Common myeloid progenitor, CD34-positive (primary cell): ENCODE measurements at regions of chr20 and their contacts with region 1.

Region 1: DNA sequence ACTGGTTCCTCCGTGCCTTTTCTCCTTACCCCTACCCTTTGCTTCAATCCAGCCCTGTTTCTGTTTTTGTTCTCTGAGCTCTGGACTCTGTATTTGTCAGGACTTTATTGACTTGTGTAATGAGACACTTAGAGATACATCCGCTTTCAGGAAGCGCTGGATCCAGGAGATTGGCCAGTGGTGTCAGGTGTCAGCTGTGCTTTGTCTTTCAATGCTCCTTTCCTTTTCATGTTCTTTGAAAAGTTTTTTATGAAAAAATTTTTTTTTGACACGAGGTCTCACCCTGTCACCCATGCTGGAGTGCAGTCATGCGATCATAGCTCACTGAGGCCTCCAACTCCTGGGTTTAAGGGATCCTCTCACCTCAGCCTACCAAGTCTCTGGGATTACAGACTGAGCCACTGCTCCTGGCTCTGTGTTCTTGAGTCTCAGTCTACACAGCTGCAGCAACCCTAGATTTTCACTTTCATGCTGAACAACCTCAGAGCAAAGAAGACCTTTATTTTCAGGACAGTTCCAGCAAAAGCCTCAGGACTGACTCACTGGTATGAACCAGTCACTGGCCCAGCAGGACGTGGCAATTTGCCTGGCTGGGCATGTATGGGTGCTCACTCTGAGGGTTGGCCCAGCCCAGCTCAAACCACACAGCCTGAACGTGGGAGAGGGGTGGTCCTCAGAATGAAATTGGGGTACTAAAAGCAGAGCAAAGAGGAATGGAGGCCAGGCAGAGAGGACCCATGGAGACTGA is 108.5 kb downstream of the DHX35 start:
- DNase-seq: no peak
- H3K4me3 ChIP-seq: no peak overlapping the region
- H3K27ac ChIP-seq: no peak overlapping the region
- H3K4me1 ChIP-seq: no peaks in the 10 kb centered on the region
- H3K27me3 ChIP-seq: peaks cover 0 to 20% (median 6%) of the 10 kb centered on the region in 5 experiments

Region 2: DNA sequence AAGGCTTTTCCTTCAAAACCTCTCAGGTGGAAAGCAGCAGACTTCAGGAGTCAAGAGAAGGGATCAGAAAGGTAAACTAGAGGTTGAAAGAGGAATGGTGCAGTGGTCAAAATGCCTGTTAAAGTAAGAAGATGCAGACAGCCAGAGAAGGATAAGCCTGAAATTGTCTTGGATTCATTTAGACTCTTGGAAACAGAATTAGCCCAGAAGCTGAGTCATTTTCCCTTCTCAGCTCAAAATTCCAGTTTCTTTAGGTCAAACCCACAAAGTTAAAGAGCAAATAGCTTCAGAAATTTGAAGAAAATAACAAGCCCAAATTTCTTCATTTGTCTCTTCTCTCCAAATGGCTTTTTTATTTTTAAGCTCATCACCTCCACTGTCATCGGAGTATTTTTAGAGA is 34.6 kb before region 1 on chr20:
- CTCF ChIA-PET with region 1: no interaction called
- POLR2A ChIA-PET with region 1: no interaction called
- DNase-seq: no peak
- H3K4me3 ChIP-seq: no peak overlapping the region
- H3K27ac ChIP-seq: no peak overlapping the region
- H3K4me1 ChIP-seq: no peaks in the 10 kb centered on the region
- H3K27me3 ChIP-seq: no peaks in the 10 kb centered on the region

Region 3: DNA sequence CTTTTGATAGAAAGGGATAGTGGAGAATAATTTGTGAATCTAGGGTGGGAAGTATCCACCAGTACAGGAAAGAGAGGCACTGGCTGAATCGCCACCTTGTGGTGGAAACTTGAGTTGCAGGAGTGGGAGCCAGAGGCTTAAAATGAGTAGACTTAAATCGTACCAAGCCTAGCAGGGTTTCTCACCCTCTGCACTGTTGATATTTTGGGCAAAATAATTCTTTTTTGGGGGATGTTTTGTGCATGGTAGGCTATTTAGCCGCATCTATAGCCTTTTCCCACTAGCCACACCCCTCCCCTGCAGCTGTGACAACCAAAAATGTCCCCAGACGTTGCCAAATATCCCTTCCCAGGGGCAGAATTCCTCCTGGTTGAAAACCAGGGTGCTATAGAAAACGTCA is 10.6 kb after region 1 on chr20:
- CTCF ChIA-PET with region 1: interaction called, 10 read pairs
- POLR2A ChIA-PET with region 1: no interaction called
- DNase-seq: peak; percentile 66 to 85 (median 76)
- H3K4me3 ChIP-seq: no peak overlapping the region
- H3K27ac ChIP-seq: no peak overlapping the region
- H3K4me1 ChIP-seq: peaks cover 0 to 4% (median 3%) of the 10 kb centered on the region in 4 experiments
- H3K27me3 ChIP-seq: peaks cover 0 to 9% (median 0%) of the 10 kb centered on the region in 5 experiments

Region 4: DNA sequence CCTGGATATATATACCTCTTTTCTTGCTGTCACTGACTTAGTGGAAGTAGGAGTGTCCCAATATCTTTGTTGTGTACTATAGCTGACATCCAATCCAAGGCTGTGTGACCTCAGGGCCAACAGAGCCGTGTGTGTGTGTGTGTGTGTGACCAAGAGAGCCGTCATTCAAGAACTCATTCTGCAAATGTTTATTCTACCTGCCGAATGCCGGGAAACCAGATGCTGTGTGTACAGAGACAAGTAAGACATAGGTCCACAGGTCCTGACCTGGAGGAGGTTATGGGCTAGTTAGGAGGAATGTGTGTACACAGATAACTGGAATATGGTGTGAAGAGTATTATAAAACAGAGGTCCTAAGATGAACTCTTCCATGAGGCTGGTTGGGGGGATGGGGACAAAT is 81.5 kb after region 1 on chr20:
- CTCF ChIA-PET with region 1: no interaction called
- POLR2A ChIA-PET with region 1: no interaction called
- DNase-seq: no peak
- H3K4me3 ChIP-seq: no peak overlapping the region
- H3K27ac ChIP-seq: no peak overlapping the region
- H3K4me1 ChIP-seq: peaks cover 0 to 19% (median 6%) of the 10 kb centered on the region in 4 experiments
- H3K27me3 ChIP-seq: no peaks in the 10 kb centered on the region